MCF 10A (cell line): ENCODE measurements at regions of chr11 and their contacts with region 1.

Region 1: DNA sequence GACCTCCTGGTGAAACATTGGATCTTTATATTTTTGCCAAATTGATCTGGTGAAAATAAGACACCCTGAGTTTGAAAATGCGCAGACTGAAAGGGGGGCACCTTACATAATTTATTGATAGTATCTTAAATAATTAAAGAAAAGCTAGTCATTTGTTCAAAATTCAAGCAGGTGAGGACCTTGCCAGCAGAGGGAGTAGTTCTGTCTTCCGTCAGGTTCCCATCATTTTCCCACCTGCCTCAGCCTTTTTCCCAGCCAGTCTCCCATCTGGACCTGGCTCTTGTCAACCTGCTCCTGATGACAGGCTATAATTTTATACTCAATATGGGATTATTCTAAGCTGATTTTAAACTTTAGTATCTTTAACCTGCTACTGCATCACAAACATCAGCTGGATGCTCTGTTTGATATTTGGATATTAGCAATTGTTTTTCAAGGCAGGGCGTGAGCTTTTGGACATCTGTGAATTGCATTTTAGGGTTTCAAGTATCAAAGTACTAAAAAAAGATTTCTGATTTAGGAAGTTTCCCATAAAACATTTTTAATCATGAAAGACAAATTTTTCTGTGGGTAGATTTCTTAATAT is 132.0 kb downstream of the ELP4 start:
- DNase-seq: peak; percentile 61
- H3K4me3 Mint-ChIP-seq: no peak overlapping the region
- H3K27ac Mint-ChIP-seq: no peak overlapping the region
- H3K4me1 Mint-ChIP-seq: peaks cover 11% of the 10 kb centered on the region
- H3K27me3 Mint-ChIP-seq: no peaks in the 10 kb centered on the region
- CTCF ChIP-seq: peak; percentile 76

Region 2: GRCh38 chr11:31397239-31397834 is 244.2 kb before region 1 on chr11:
- CTCF ChIA-PET with region 1: interaction called, 5 read pairs
- POLR2A ChIA-PET with region 1: no interaction called
- intact Hi-C with region 1: loop called (anchors 1 kb)
- DNase-seq: peak; percentile 31
- H3K4me3 Mint-ChIP-seq: no peak overlapping the region
- H3K27ac Mint-ChIP-seq: no peak overlapping the region
- H3K4me1 Mint-ChIP-seq: no peaks in the 10 kb centered on the region
- H3K27me3 Mint-ChIP-seq: no peaks in the 10 kb centered on the region
- CTCF ChIP-seq: peak; percentile 54

Region 3: GRCh38 chr11:31509429-31510345 is 131.9 kb before region 1 on chr11 and contains the starts of genes ELP4 and IMMP1L:
- CTCF ChIA-PET with region 1: interaction called, 5 read pairs
- POLR2A ChIA-PET with region 1: interaction called, 3 read pairs
- intact Hi-C with region 1: loop called (anchors 5 kb)
- DNase-seq: peak; percentile 98
- H3K4me3 Mint-ChIP-seq: peak within 1 kb of the TSS; percentile 82
- H3K27ac Mint-ChIP-seq: peak within 1 kb of the TSS; percentile 92
- H3K4me1 Mint-ChIP-seq: peaks cover 16% of the 10 kb centered on the region
- H3K27me3 Mint-ChIP-seq: no peaks in the 10 kb centered on the region
- CTCF ChIP-seq: no peak
- total RNA-seq, gene ELP4: 16.2 and 18.3 TPM in 2 replicates
- total RNA-seq, gene IMMP1L: 26.7 and 32.2 TPM in 2 replicates

Region 4: DNA sequence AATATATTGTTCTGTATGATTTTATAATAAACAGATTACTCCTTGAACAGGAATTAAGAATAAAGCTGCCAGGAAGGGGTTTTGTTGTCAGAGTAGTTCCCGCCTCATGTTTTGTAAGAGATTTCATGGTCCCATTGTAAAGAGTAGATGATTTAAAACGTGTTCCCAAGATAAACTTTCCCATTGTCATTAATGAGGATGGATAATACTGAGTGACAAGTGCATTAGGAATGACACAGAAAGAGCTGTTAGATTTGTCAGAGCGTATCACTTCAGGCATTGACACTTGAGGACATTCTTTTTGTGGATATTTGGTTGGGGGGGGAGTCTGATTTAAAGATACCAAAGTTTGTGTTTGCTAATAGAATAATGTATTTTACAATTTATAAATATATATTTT is 22.6 kb after region 1 on chr11:
- CTCF ChIA-PET with region 1: interaction called, 10 read pairs
- POLR2A ChIA-PET with region 1: no interaction called
- intact Hi-C with region 1: no loop called
- DNase-seq: no peak
- H3K4me3 Mint-ChIP-seq: no peak overlapping the region
- H3K27ac Mint-ChIP-seq: no peak overlapping the region
- H3K4me1 Mint-ChIP-seq: no peaks in the 10 kb centered on the region
- H3K27me3 Mint-ChIP-seq: no peaks in the 10 kb centered on the region
- CTCF ChIP-seq: no peak

Region 5: GRCh38 chr11:31690041-31690440 is 48.5 kb after region 1 on chr11:
- CTCF ChIA-PET with region 1: no interaction called
- POLR2A ChIA-PET with region 1: no interaction called
- intact Hi-C with region 1: no loop called
- DNase-seq: peak; percentile 2
- H3K4me3 Mint-ChIP-seq: no peak overlapping the region
- H3K27ac Mint-ChIP-seq: no peak overlapping the region
- H3K4me1 Mint-ChIP-seq: peaks cover 10% of the 10 kb centered on the region
- H3K27me3 Mint-ChIP-seq: no peaks in the 10 kb centered on the region
- CTCF ChIP-seq: no peak

Region 6: GRCh38 chr11:31786996-31787685 is 145.6 kb after region 1 on chr11:
- CTCF ChIA-PET with region 1: no interaction called
- POLR2A ChIA-PET with region 1: no interaction called
- intact Hi-C with region 1: no loop called
- DNase-seq: no peak
- H3K4me3 Mint-ChIP-seq: no peak overlapping the region
- H3K27ac Mint-ChIP-seq: no peak overlapping the region
- H3K4me1 Mint-ChIP-seq: no peaks in the 10 kb centered on the region
- H3K27me3 Mint-ChIP-seq: no peaks in the 10 kb centered on the region
- CTCF ChIP-seq: no peak

Region 7: DNA sequence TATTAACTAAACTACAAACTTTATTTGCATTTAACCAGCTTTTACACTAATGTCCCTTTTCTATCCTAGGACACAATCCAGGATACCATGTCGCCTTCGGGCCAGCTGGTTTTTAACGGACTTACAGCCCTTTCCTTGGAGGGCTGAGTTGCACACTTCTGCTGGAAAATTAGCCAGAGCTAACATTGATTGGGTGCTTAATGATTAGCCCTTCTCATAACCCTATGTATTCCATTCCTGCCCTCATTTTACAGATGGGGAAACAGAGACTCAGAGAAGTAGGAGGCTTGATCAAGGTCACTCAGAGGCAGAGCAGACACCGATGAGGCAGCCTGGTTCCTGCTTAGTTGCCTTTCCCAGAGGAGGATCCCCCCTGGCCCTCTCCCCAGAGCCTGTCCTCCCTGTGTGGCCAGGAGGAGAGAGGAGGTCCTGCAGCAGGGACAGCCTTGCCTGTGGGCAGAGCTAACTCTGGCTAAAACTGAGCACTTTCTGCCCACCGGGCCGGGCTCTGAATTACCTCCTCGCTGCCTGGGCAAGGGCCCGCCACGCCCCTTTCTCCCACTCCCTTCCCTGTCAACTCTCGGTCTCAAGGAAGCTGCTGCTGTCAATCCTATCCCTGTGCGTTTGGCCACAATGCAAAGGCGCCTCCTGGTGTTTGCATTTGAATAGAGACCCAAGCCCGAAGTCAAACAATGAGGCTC is 229.2 kb after region 1 on chr11:
- CTCF ChIA-PET with region 1: interaction called, 97 read pairs
- POLR2A ChIA-PET with region 1: interaction called, 4 read pairs
- intact Hi-C with region 1: loop called (anchors 1 kb)
- DNase-seq: peak; percentile 66
- H3K4me3 Mint-ChIP-seq: no peak overlapping the region
- H3K27ac Mint-ChIP-seq: no peak overlapping the region
- H3K4me1 Mint-ChIP-seq: no peaks in the 10 kb centered on the region
- H3K27me3 Mint-ChIP-seq: peaks cover 11% of the 10 kb centered on the region
- CTCF ChIP-seq: peak; percentile 68